Activated CD4-positive, alpha-beta T cell treated with anti-CD3 and anti-CD28 coated beads, Interleukin-2, amount 10 ng/mL, durations not matched to agents 24 days and 14 days (primary cell): ENCODE measurements at regions of chr5 and their contacts with region 1.

Region 1: DNA sequence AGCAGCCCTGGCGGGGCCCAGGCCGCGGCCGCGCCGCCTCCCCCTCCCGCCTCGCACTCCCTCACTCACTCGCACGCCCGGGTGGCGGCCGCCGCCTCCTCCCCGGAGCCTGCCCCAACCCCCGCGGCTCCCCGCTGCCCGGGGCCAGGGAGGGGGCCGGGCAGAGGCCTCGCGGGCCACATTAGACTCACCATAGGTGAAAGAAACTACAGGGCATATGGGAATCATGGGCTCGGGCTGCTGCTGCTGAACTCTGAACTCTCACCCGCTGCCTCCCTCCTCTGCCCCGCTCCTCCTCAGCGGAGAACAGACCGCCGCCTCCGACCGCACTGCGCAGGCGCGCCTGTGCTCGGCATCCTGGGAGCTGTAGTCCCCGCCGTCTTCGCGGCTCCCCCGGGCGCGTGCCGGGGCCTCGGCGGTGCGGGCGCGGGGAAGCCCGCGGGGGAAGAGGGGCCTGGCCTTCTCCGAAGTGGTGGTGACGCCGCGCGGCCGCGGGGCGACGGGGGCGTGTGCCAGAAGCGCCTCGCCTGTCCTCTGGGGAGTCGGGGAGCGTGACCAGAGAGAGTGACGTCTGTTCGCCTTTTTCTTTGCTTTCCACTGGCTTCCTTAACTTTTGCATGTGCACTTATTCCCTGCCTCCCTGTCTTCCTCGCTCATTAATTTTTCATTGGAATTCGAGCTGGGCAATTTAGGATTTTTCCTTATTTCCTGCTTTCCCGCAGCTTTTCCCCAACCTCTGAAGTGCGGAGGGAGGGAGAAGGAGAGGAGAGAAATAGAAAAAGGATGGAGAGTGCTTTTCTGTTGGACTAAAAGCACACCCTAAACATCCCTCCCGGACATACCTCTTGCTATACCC is at the start of gene ZFR:
- DNase-seq: peak; percentile 98
- H3K4me3 Mint-ChIP-seq: peak within 1 kb of the TSS; percentile 98
- H3K27ac Mint-ChIP-seq: peak within 1 kb of the TSS; percentile 98
- H3K4me1 Mint-ChIP-seq: peaks cover 29% of the 10 kb centered on the region
- H3K27me3 Mint-ChIP-seq: peaks cover 11% of the 10 kb centered on the region
- total RNA-seq, gene ZFR: 68.1 and 70.4 TPM in 2 replicates

Region 2: GRCh38 chr5:32174011-32174870 is 270.4 kb before region 1 on chr5 and contains the start of gene GOLPH3:
- intact Hi-C with region 1: loop called (anchors 2 kb)
- DNase-seq: peak; percentile 98
- H3K4me3 Mint-ChIP-seq: peak within 1 kb of the TSS; percentile 95
- H3K27ac Mint-ChIP-seq: peak within 1 kb of the TSS; percentile 98
- H3K4me1 Mint-ChIP-seq: peaks cover 32% of the 10 kb centered on the region
- H3K27me3 Mint-ChIP-seq: no peaks in the 10 kb centered on the region
- total RNA-seq, gene GOLPH3: 85.4 and 92.7 TPM in 2 replicates

Region 3: GRCh38 chr5:32283539-32284377 is 160.9 kb before region 1 on chr5:
- intact Hi-C with region 1: loop called (anchors 1 kb)
- DNase-seq: peak; percentile 61
- H3K4me3 Mint-ChIP-seq: no peak overlapping the region
- H3K27ac Mint-ChIP-seq: peak overlapping the region; percentile 14
- H3K4me1 Mint-ChIP-seq: peaks cover 36% of the 10 kb centered on the region
- H3K27me3 Mint-ChIP-seq: no peaks in the 10 kb centered on the region

Region 4: GRCh38 chr5:32388432-32389129 is 56.1 kb before region 1 on chr5:
- intact Hi-C with region 1: loop called (anchors 5 kb)
- DNase-seq: no peak
- H3K4me3 Mint-ChIP-seq: peak overlapping the region; percentile 23
- H3K27ac Mint-ChIP-seq: peak overlapping the region; percentile 88
- H3K4me1 Mint-ChIP-seq: peaks cover 7% of the 10 kb centered on the region
- H3K27me3 Mint-ChIP-seq: no peaks in the 10 kb centered on the region

Region 5: GRCh38 chr5:32531885-32532520 is 87.3 kb after region 1 on chr5:
- intact Hi-C with region 1: loop called (anchors 2 kb)
- DNase-seq: peak; percentile 89
- H3K4me3 Mint-ChIP-seq: peak overlapping the region; percentile 93
- H3K27ac Mint-ChIP-seq: peak overlapping the region; percentile 97
- H3K4me1 Mint-ChIP-seq: peaks cover 45% of the 10 kb centered on the region
- H3K27me3 Mint-ChIP-seq: no peaks in the 10 kb centered on the region